HEK293T (cell line): ENCODE measurements at regions of chr12 and their contacts with region 1.

Region 1: GRCh38 chr12:52879394-52880351 is 25.2 kb downstream of the KRT8 start:
- DNase-seq: peak; percentile 85

Region 2: GRCh38 chr12:52156736-52157565 is 722.7 kb before region 1 on chr12:
- CTCF ChIA-PET with region 1: interaction called, 20 read pairs
- POLR2A ChIA-PET with region 1: no interaction called
- DNase-seq: peak; percentile 81

Region 3: DNA sequence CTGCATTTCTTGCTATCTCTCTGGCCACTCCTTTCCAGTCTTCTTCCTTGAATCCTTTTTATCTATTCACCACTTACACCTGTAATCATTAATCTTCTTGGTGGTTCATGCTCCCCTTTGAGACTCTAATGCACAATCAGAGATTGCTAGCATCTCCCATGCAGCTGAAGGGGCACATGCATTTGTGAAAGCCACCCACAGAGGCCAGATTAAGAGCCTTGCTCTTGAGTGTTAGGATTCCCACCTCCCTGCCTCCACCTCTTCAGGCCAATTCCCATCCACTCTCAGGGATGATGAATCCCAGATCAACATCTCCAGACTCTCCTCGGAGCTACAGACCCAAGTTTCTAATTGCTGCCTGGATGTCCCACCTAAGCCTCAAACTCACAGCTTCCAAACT is 49.9 kb after region 1 on chr12:
- CTCF ChIA-PET with region 1: no interaction called
- POLR2A ChIA-PET with region 1: no interaction called
- DNase-seq: no peak